ENCODE measurements at regions of chr11 and their contacts with region 1.

Region 1: GRCh38 chr11:107770551-107770951 is 58.7 kb upstream of the SLN start:
- DNase-seq: no peak
- ATAC-seq: peak; percentile 41
- H3K4me3 ChIP-seq: no peak overlapping the region
- H3K27ac ChIP-seq: no peak overlapping the region; the same call in 1 of the 2 replicates
- H3K4me1 ChIP-seq: 0 out of 2 replicates have a peak, but pooled peaks cover 4% of the 10 kb centered on the region
- H3K27me3 ChIP-seq: no peaks in the 10 kb centered on the region
- CTCF ChIP-seq: no peak
- EP300 ChIP-seq: no peak
- POLR2A ChIP-seq: no peak
- RAD21 ChIP-seq: no peak

Region 2: GRCh38 chr11:106656646-106657045 is 1113.9 kb before region 1 on chr11:
- CTCF ChIA-PET with region 1: no interaction called
- POLR2A ChIA-PET with region 1: no interaction called
- RAD21 ChIA-PET with region 1: no interaction called
- SMC1A ChIA-PET with region 1: no interaction called
- in situ Hi-C with region 1: no loop called
- intact Hi-C with region 1: no loop called
- DNase-seq: no peak
- ATAC-seq: no peak
- H3K4me3 ChIP-seq: no peak overlapping the region
- H3K27ac ChIP-seq: no peak overlapping the region
- H3K4me1 ChIP-seq: no peaks in the 10 kb centered on the region
- H3K27me3 ChIP-seq: no peaks in the 10 kb centered on the region
- CTCF ChIP-seq: no peak
- EP300 ChIP-seq: no peak
- POLR2A ChIP-seq: no peak
- RAD21 ChIP-seq: no peak

Region 3: GRCh38 chr11:107573438-107573837 is 197.1 kb before region 1 on chr11:
- CTCF ChIA-PET with region 1: interaction called, 6 read pairs
- POLR2A ChIA-PET with region 1: no interaction called
- RAD21 ChIA-PET with region 1: interaction called, 5 read pairs
- SMC1A ChIA-PET with region 1: interaction called, 3 read pairs
- in situ Hi-C with region 1: no loop called
- intact Hi-C with region 1: loop called (anchors 5 kb)
- DNase-seq: no peak
- ATAC-seq: no peak
- H3K4me3 ChIP-seq: no peak overlapping the region
- H3K27ac ChIP-seq: no peak overlapping the region
- H3K4me1 ChIP-seq: no peaks in the 10 kb centered on the region; the same call in 1 of the 2 replicates
- H3K27me3 ChIP-seq: no peaks in the 10 kb centered on the region
- CTCF ChIP-seq: no peak
- EP300 ChIP-seq: no peak
- POLR2A ChIP-seq: no peak
- RAD21 ChIP-seq: no peak

Region 4: GRCh38 chr11:107741044-107741823 is 29.3 kb before region 1 on chr11:
- CTCF ChIA-PET with region 1: interaction called, 96 read pairs
- POLR2A ChIA-PET with region 1: interaction called, 3 read pairs
- RAD21 ChIA-PET with region 1: interaction called, 28 read pairs
- SMC1A ChIA-PET with region 1: interaction called, 33 read pairs
- in situ Hi-C with region 1: no loop called
- intact Hi-C with region 1: loop called (anchors 2 kb)
- DNase-seq: peak; percentile 25
- ATAC-seq: peak; percentile 98
- H3K4me3 ChIP-seq: no peak overlapping the region
- H3K27ac ChIP-seq: no peak overlapping the region
- H3K4me1 ChIP-seq: no peaks in the 10 kb centered on the region
- H3K27me3 ChIP-seq: no peaks in the 10 kb centered on the region
- CTCF ChIP-seq: peak; percentile 80 to 92 (median 87)
- EP300 ChIP-seq: no peak
- POLR2A ChIP-seq: no peak
- RAD21 ChIP-seq: peak; percentile 81

Region 5: DNA sequence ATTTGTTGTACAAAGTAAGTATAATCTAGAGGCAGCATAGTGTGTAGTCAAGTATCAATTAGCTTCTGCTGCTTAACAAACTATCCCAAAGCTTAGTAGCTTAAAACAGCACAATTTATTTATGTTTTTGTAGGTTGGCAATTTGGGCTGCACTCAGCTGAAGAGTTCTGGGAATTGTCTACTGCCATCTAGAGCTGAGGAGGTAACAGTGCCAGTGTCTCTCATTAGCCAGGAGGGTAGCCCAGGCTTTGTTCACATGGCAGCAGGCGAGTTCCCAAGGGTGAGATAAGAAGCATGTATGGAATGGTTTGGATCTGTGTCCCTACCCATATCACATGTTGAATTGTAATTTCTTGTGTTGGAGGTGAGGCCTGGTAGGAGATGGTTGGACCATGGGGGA is 12.9 kb before region 1 on chr11:
- CTCF ChIA-PET with region 1: interaction called, 43 read pairs
- POLR2A ChIA-PET with region 1: interaction called, 6 read pairs
- RAD21 ChIA-PET with region 1: no interaction called
- SMC1A ChIA-PET with region 1: interaction called, 6 read pairs
- in situ Hi-C with region 1: no loop called
- intact Hi-C with region 1: no loop called
- DNase-seq: no peak
- ATAC-seq: peak; percentile 60; the same call in 2 of the 3 replicates
- H3K4me3 ChIP-seq: no peak overlapping the region
- H3K27ac ChIP-seq: no peak overlapping the region
- H3K4me1 ChIP-seq: no peaks in the 10 kb centered on the region
- H3K27me3 ChIP-seq: no peaks in the 10 kb centered on the region
- CTCF ChIP-seq: peak; percentile 20 to 22 (median 21); a peak in 4 of 6 replicates
- EP300 ChIP-seq: no peak
- POLR2A ChIP-seq: no peak
- RAD21 ChIP-seq: no peak

Region 6: DNA sequence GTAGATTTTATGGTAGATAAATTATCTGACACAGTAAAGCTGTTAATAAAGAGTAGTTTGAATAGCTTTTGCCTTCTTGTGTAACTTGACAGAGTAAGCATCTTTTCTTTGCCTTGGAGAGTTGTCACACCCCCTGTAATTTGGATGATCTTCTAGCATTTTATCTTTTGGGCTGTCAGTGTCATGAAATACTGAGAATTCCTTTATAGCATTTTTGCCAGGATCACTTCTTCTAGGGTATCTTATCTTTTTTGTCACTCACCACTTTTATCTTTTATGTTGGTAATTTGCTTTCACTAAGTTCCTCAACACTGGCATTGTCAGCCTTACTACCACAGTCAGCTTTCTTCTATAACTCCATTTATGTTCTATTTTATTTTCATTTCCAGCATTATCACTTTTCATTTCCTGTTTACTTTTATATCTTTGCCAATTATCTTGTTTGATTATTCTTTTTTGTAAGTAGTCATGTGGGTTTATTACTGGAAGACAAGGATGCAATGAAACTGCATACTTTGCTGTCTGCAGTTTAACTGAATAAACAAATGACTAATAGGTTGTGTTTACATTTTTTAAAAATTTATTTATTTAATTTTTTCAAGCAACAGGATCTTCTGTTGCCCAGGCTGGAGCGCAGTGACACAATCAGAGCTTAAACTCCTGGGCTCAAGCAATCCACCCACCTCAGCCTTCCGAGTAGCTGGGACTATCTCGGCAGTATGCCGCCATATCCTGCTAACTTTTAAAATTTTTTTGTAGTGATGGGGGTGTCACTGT is 322.8 kb after region 1 on chr11:
- CTCF ChIA-PET with region 1: no interaction called
- POLR2A ChIA-PET with region 1: no interaction called
- RAD21 ChIA-PET with region 1: no interaction called
- SMC1A ChIA-PET with region 1: no interaction called
- in situ Hi-C with region 1: no loop called
- intact Hi-C with region 1: no loop called
- DNase-seq: no peak
- ATAC-seq: no peak
- H3K4me3 ChIP-seq: no peak overlapping the region
- H3K27ac ChIP-seq: no peak overlapping the region
- H3K4me1 ChIP-seq: no peaks in the 10 kb centered on the region
- H3K27me3 ChIP-seq: no peaks in the 10 kb centered on the region
- CTCF ChIP-seq: no peak
- EP300 ChIP-seq: no peak
- POLR2A ChIP-seq: no peak
- RAD21 ChIP-seq: no peak

Measured in GM12878 (cell line).